Gastrocnemius medialis (tissue), 4 donors: ENCODE measurements at regions of chr1 and their contacts with region 1.

Region 1: DNA sequence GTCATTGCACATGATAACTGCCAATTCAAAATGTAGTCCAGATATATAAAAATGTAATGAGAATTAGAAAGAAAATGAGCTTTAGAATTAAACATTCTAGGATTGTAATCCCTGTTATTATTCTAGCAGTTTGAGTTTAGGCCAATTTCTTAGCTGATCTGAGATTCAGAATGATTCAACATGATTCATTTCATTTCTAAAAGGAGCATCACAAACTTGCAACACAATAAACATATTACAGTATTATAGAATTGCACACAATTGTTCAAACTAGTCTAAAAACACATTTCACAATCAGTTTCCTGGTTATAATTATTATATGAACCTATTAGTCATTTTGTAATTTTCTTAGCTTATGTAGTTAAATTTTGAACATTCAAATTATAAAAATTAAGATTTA is 43.3 kb upstream of the TSHB start:
- DNase-seq: no peak
- ATAC-seq: no peak
- H3K4me3 ChIP-seq: no peak overlapping the region
- H3K27ac ChIP-seq: no peak overlapping the region
- H3K4me1 ChIP-seq: no peaks in the 10 kb centered on the region
- H3K27me3 ChIP-seq: no peaks in the 10 kb centered on the region
- CTCF ChIP-seq: no peak
- POLR2A ChIP-seq: no peak

Region 2: DNA sequence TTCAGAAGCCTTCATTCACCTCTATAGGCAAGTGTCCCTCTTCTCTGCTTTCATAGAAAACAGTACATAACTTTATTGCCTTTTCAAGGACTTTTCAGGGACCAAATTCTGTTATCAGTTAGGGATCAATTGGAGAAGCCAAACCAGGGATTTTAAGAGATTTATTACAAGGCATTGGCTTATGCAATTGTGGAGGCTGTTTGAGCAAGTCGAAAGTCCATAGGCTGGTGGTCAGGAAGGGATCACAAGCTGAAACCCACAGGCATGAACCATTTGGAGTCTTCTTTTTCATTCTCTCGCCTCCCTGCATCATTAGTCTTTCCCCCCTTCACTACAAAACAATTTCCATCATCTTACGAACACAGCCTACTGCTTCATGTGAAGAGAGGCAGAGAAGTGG is 166.4 kb before region 1 on chr1:
- in situ Hi-C with region 1: no loop called
- intact Hi-C with region 1: no loop called
- DNase-seq: no peak
- ATAC-seq: no peak
- H3K4me3 ChIP-seq: no peak overlapping the region
- H3K27ac ChIP-seq: no peak overlapping the region
- H3K4me1 ChIP-seq: no peaks in the 10 kb centered on the region
- H3K27me3 ChIP-seq: no peaks in the 10 kb centered on the region
- CTCF ChIP-seq: no peak
- POLR2A ChIP-seq: no peak

Region 3: DNA sequence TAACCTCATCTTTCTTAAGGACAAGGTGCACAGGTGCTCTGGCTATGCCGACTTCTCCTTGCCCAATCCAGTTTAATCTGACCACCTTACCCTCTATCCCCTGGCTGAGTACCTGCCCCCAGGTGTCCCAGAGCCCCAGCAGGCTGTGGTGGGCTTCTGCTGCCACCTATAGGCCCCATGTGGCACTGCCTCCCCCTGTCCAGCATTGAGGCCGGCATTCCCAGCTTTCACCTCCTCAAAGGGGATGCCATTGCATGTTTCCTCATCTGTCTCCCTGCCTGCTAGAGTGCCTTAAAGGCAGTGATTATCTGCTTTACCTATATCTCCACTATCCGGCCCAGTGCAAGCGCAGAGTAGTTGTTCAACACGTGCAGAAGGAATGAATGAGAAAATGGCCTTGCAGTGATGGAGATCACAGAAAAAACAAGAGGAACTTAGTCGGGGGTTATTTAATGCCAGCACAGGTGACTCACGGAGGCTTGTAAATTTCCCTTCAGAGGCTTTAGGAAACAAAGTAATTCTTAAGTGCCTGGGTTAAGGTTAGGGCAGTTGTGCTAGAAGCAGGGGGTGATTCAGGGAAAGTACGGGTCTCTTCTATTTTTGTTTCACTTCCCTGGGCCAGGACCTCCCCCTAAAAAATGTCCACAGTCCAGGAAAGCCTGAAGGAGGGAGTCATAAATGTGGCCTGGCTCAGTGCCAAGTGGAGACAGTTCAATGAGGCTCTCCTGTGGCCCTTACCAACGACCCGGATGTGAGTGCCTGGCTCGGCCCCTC is 483.6 kb after region 1 on chr1:
- in situ Hi-C with region 1: no loop called
- intact Hi-C with region 1: loop called (anchors 10 kb)
- DNase-seq: peak; percentile 20 to 30
- ATAC-seq: peak; percentile 52 to 83
- H3K4me3 ChIP-seq: no peak overlapping the region
- H3K27ac ChIP-seq: no peak overlapping the region
- H3K4me1 ChIP-seq: no peaks in the 10 kb centered on the region
- H3K27me3 ChIP-seq: no peaks in the 10 kb centered on the region
- CTCF ChIP-seq: peak; percentile 79 to 89 (median 83)
- POLR2A ChIP-seq: no peak

Region 4: DNA sequence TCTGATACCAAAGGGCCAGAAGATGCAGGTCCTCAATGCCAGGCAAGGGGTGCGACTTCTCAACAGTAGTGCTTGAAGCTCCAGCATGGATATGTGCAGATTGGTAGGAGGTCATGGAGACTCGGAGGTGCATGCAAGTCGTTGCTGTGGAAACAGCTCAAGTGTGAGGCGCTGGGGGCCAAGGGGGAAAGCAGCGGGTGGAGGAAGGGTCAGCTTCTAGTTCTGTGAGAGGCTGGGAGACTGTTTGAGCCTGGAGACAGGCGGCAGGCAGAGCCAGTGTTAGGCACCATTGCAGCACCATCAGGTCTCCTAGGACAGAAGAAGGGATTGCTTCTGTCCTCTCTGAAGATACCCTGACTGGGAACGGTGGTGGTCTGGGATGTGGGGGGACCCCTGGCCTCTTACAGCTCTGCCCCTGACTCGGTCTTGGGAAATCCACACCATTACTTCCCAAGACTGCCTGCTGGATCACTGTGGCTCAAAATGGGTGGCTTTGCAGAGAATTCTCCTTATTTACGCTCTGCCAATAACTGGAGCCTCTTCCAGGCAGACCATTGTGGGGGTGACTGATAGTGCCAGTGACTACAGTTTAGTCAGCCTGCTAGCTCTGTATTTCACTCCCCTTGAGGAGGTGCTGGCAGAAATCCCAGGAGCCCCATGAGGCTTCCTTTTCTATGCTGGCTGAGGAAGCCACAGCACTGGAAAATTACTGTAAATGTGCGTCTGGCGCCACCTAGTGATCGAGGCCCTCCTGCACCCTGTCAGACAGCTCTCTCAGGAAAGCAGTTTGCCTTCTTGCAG is 609.2 kb after region 1 on chr1:
- in situ Hi-C with region 1: loop called in 1 of 4 experiments (anchors 10 kb)
- intact Hi-C with region 1: no loop called
- DNase-seq: peak; percentile 47 to 66
- ATAC-seq: peak; percentile 69 to 77
- H3K4me3 ChIP-seq: no peak overlapping the region
- H3K27ac ChIP-seq: no peak overlapping the region
- H3K4me1 ChIP-seq: no peaks in the 10 kb centered on the region
- H3K27me3 ChIP-seq: no peaks in the 10 kb centered on the region
- CTCF ChIP-seq: peak; percentile 61 to 93 (median 76)
- POLR2A ChIP-seq: no peak